Colonic mucosa (tissue), 4 donors: ENCODE measurements at regions of chr18 and their contacts with region 1.

Region 1: GRCh38 chr18:37537868-37538525 is 27.6 kb downstream of the CELF4 start:
- DNase-seq: peak; percentile 58
- H3K4me3 ChIP-seq: no peak overlapping the region
- H3K27ac ChIP-seq: no peak overlapping the region
- H3K4me1 ChIP-seq: no peaks in the 10 kb centered on the region
- H3K27me3 ChIP-seq: no peaks in the 10 kb centered on the region
- CTCF ChIP-seq: peak; percentile 84

Region 2: DNA sequence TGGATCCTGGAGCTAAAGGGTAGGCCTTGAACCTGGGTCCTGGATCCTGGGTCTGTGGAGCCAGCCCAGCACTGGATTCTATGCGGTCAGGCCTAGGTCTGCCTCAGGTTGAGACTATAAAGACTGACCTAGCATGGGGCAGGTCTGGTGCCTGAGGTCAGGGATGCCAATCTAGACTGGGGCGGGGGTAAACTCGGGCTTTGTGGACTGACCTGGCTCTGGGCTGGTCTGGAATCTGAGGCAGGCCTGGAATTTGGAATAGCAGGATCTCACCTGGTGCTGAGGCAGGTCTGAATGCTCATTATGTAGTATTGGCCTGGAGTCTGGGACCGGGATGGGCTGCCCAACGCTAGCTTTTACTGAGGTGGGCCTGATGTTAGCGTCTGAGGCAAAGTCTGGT is 453.1 kb before region 1 on chr18:
- intact Hi-C with region 1: no loop called
- DNase-seq: no peak
- H3K4me3 ChIP-seq: no peak overlapping the region
- H3K27ac ChIP-seq: no peak overlapping the region
- H3K4me1 ChIP-seq: no peaks in the 10 kb centered on the region
- H3K27me3 ChIP-seq: no peaks in the 10 kb centered on the region
- CTCF ChIP-seq: no peak

Region 3: DNA sequence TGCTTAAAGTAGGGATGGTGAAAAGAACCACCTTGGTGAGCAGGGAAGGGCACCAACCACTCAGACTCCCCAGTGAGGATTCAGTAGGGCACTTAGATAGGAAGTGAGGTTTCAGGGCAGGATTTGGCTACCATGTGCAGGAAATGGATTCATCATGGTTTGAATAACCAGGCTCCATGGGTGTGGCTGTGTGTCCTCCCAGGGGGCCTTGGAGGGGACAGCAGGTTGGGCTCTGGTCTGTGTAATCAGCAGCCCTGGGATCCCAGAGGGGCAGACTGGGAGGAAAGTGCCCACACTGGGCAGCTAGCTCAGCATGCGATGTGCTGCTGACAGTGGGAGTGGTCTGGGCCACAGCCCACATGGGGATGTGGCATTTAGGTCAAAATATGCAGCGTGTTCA is 197.0 kb before region 1 on chr18:
- intact Hi-C with region 1: loop called (anchors 5 kb)
- DNase-seq: no peak
- H3K4me3 ChIP-seq: no peak overlapping the region
- H3K27ac ChIP-seq: no peak overlapping the region
- H3K4me1 ChIP-seq: no peaks in the 10 kb centered on the region
- H3K27me3 ChIP-seq: no peaks in the 10 kb centered on the region
- CTCF ChIP-seq: no peak

Region 4: DNA sequence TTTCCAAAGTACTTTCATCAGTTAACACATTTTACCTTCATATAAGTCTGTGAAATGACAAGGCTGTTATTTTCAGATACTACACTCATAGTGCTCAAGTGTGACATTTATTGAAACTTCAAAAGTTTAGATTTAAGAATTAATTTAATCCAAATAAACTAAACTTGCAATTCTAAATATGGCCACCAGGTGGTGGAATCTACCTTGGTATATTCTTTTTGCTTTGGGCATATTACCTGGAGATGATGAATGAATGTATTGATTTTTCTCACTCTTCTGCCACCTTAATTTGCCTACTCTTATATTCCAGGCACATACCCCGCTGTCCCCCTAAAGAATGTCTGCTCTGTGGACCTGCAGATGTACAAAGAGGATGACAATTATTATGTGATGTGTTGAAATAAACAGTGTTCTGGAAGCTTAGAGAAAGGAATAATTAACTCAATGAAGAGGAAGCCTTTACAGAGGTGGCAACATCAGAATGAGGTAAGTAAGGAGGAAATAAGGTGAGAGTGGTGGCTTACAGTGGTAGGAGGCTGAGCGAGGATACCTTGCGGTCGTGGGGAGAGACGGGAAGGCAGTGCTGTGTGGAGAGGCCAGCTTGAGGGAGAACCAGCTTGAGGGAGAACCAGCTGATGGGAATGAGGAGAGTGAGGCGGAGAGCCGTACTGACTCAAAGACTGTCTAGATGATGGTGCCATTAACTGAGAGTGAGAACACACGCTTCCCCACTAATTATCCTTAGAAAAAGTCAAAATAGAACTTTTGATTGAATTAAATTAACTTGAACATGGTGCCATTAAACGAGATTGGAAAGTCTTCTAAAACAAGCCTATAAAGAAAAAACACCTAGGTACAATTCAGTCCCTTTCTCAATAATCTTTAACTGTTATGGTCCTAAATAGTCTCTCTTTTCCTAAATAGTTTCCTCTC is 151.9 kb before region 1 on chr18:
- intact Hi-C with region 1: loop called (anchors 5 kb)
- DNase-seq: no peak
- H3K4me3 ChIP-seq: no peak overlapping the region
- H3K27ac ChIP-seq: no peak overlapping the region
- H3K4me1 ChIP-seq: no peaks in the 10 kb centered on the region
- H3K27me3 ChIP-seq: no peaks in the 10 kb centered on the region
- CTCF ChIP-seq: peak; percentile 62

Region 5: DNA sequence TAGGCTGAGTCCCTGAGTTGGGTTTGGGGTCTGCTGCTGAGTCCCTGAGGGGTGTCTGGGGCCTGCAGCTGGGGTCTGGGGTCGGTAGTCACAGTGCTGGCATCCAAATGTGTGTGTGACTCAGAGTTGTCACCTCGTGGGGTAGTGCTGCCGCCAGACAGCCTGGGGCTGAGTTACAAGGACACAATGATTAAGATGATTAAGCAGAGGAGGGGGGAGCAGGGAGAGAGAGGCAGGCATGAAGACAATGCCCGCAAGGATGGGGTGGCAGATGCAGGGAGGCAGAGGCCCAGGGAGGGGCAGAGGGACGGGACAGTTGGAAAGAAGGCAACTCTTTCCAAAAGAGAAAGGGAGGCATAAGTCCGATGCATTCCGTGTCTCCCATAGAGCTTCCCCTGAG is 92.6 kb before region 1 on chr18:
- intact Hi-C with region 1: loop called (anchors 10 kb)
- DNase-seq: no peak
- H3K4me3 ChIP-seq: no peak overlapping the region
- H3K27ac ChIP-seq: no peak overlapping the region
- H3K4me1 ChIP-seq: no peaks in the 10 kb centered on the region
- H3K27me3 ChIP-seq: no peaks in the 10 kb centered on the region
- CTCF ChIP-seq: no peak

Region 6: GRCh38 chr18:37701967-37702366 is 164.0 kb after region 1 on chr18:
- intact Hi-C with region 1: no loop called
- DNase-seq: no peak
- H3K4me3 ChIP-seq: no peak overlapping the region
- H3K27ac ChIP-seq: no peak overlapping the region
- H3K4me1 ChIP-seq: no peaks in the 10 kb centered on the region
- H3K27me3 ChIP-seq: no peaks in the 10 kb centered on the region
- CTCF ChIP-seq: no peak